Motor neuron (in vitro differentiated cells): ENCODE measurements at regions of chr2 and their contacts with region 1.

Region 1: GRCh38 chr2:24409700-24410556 is 49.6 kb upstream of the ITSN2 start:
- ATAC-seq: peak; percentile 69 to 98 (median 84)
- H3K4me3 ChIP-seq: no peak overlapping the region
- H3K27ac ChIP-seq: no peak overlapping the region
- H3K4me1 ChIP-seq: no peaks in the 10 kb centered on the region

Region 2: DNA sequence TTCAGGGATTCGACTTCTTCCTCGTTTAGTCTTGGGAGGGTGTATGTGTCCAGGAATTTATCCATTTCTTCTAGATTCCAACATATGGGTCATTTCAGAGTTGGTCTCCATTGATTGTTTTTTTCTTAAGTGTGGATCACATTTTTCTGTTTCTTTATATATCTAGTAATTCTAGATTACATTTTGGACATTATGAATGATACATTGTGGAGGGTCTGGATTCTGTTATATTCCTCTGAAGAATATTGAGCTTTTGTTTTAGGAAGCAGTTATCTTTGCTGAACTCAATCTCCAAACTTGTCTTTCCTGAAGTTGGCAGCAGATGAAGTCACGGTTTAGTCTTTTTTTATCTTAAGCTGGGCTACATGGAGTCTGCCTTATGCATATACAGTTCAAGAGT is 277.4 kb before region 1 on chr2:
- in situ Hi-C with region 1: no loop called
- ATAC-seq: no peak
- H3K4me3 ChIP-seq: no peak overlapping the region
- H3K27ac ChIP-seq: no peak overlapping the region
- H3K4me1 ChIP-seq: no peaks in the 10 kb centered on the region

Region 3: DNA sequence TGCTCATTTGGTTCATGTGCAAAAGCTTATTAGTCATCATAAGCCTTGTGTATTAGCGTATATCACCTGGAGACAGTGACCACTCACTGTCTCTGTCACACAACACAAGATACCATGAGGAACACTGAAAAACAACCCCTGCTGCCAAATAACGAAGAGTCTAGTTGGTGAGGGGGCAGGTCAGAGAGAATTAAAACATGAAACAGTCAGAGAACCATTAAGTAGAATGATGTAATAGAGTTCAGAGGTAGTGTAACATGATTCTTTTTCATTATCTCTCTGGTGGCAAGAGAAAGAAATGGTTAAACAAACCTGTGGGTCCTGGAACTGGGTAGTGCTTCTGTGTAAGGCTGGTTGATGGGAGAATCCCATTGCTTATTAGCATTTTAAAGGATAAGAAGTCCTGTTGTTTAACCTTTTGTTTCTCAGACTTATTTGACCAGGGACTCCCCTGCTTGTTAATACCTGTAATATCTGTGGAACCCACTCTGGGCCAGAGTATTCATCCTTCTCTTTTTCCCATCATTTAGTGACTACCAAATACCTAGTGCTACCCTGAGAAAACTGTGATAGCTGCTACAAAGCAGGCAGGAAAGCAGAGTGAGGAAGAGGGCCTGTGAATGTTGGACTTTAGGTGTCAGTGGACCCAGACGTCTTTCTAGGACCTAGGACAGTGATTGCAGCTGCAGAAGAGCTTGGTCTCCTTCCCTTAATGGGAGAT is 345.2 kb after region 1 on chr2:
- in situ Hi-C with region 1: loop called in 1 of 9 experiments (anchors 25 kb)
- ATAC-seq: peak in 3 of 8 experiments; percentile 48 to 54 (median 50)
- H3K4me3 ChIP-seq: no peak overlapping the region
- H3K27ac ChIP-seq: no peak overlapping the region
- H3K4me1 ChIP-seq: no peaks in the 10 kb centered on the region

Region 4: GRCh38 chr2:24827321-24828237 is 417.7 kb after region 1 on chr2:
- in situ Hi-C with region 1: loop called in 7 of 9 experiments (anchors 10 to 25 kb)
- ATAC-seq: peak; percentile 92 to 98 (median 98)
- H3K4me3 ChIP-seq: no peak overlapping the region
- H3K27ac ChIP-seq: no peak overlapping the region
- H3K4me1 ChIP-seq: peaks cover 0 to 5% of the 10 kb centered on the region in 2 donors

Region 5: GRCh38 chr2:24971536-24972314 is 561.8 kb after region 1 on chr2 and contains the start of gene DNAJC27:
- in situ Hi-C with region 1: loop called in 1 of 9 experiments (anchors 25 kb)
- ATAC-seq: peak; percentile 87 to 96 (median 95)
- H3K4me3 ChIP-seq: peak within 1 kb of the TSS; percentile 55 to 85 (median 75)
- H3K27ac ChIP-seq: peak within 1 kb of the TSS; percentile 97 to 99
- H3K4me1 ChIP-seq: peaks cover 4 to 8% of the 10 kb centered on the region in 2 donors
- total RNA-seq, gene DNAJC27: 5.2 to 12.5 (median 8.1) TPM

Region 6: DNA sequence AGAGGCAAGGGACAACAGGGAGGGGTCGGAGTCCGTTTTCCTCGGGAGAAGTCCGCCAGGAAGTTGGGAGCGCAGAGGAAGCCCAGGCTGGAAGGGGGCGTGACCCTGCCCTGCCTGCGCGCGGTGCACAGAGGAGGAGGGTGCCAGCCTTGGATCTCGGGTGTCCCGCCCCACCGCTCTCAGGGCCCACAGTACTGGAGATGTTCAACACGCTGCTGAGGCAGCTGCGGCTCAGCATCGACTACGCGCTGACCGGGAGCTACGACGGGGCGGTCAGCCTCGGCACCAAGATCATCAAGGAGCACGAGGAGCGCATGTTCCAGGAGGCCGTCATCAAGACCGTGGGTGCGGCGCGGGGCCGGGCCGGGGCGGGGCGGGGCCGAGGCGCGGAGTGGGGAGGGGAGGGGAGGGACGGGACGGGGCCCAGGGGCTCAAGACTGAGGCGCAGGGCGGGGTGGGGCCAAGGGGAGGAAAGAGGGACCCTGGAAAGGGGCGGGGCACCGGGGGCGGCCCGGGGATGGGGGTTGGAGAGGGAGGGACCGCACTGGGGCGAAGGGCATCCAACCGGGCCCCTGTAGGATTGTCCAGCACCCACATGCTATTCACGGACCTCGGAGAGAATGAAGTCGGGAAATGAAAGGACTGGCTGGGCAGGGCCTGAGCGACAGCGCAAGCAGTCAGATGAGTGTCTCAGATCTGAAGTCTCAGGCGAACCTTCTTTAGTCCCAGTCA is 721.8 kb after region 1 on chr2:
- in situ Hi-C with region 1: loop called in 2 of 9 experiments (anchors 25 kb)
- ATAC-seq: peak in 7 of 8 experiments; percentile 14 to 84 (median 59)
- H3K4me3 ChIP-seq: no peak overlapping the region
- H3K27ac ChIP-seq: no peak overlapping the region
- H3K4me1 ChIP-seq: peaks cover 0 to 7% of the 10 kb centered on the region in 2 donors